ENCODE measurements at regions of chr1 and their contacts with region 1.

Region 1: DNA sequence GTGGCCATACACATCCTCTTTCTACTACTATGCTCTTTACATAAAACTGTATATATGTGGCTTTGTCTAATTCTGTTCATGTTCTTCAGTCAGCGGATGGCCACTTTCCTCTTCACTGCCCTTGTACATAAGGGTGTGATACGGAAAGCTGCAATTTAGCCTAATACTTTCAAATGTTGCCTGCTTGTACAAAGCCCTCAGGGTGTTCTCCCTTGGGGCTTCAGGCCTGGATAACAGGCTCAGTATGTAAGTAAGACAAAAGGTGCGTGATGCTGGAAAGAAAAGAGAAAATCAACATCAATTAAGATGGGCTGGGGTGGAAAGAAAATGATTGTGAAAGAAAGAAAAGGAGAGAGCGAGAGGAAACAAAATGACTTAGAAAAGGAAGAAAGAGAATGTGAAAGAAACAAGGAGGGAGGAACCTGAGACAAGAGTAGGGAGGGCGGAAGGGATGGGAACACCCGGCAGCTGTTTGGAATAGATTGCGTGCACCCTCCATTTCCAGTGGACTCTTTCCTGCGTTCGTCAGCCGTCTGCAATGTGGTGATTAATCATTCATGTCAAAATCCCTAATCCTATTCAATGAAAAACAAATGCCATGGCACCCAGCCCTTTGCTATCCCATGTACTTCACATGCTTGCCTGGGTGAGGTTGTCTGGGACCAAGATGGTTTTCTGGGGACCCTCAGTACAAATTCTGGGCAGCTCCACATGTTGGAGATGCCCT is 553.6 kb downstream of the NUF2 start:
- DNase-seq: no peak
- ATAC-seq: no peak
- H3K4me3 ChIP-seq: no peak overlapping the region
- H3K27ac ChIP-seq: no peak overlapping the region
- H3K4me1 ChIP-seq: no peaks in the 10 kb centered on the region
- H3K27me3 ChIP-seq: no peaks in the 10 kb centered on the region
- CTCF ChIP-seq: no peak
- POLR2A ChIP-seq: no peak
- RAD21 ChIP-seq: no peak

Region 2: DNA sequence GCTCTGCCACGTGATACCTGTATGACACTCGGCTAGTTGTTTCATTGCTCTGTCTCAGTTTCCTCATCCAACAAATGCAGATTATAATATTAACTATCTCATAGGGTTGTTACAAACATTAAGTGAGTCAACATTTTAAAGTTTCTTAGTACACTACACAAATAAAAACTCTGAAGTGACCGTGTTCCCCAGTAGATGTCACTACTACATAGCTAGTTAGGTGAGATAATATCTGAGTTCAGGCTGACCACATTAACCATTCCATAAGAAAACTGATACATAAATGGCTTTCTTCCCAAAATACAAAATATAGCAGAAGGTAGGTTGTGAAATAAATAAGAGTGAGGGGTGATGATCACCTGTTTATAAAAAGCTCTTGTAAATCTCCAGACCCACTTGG is 339.6 kb before region 1 on chr1:
- CTCF ChIA-PET with region 1: no interaction called
- POLR2A ChIA-PET with region 1: no interaction called
- RAD21 ChIA-PET with region 1: no interaction called
- intact Hi-C with region 1: loop called (anchors 10 kb)
- DNase-seq: peak; percentile 10
- ATAC-seq: peak; percentile 70
- H3K4me3 ChIP-seq: no peak overlapping the region
- H3K27ac ChIP-seq: no peak overlapping the region
- H3K4me1 ChIP-seq: no peaks in the 10 kb centered on the region
- H3K27me3 ChIP-seq: no peaks in the 10 kb centered on the region
- CTCF ChIP-seq: peak; percentile 19 to 56 (median 31); a peak in 4 of 6 replicates
- POLR2A ChIP-seq: no peak
- RAD21 ChIP-seq: peak; percentile 64

Region 3: GRCh38 chr1:163807061-163808049 is 68.0 kb before region 1 on chr1:
- CTCF ChIA-PET with region 1: no interaction called
- POLR2A ChIA-PET with region 1: no interaction called
- RAD21 ChIA-PET with region 1: no interaction called
- intact Hi-C with region 1: no loop called
- DNase-seq: no peak
- ATAC-seq: no peak
- H3K4me3 ChIP-seq: no peak overlapping the region
- H3K27ac ChIP-seq: no peak overlapping the region
- H3K4me1 ChIP-seq: no peaks in the 10 kb centered on the region
- H3K27me3 ChIP-seq: no peaks in the 10 kb centered on the region
- CTCF ChIP-seq: no peak
- POLR2A ChIP-seq: no peak
- RAD21 ChIP-seq: no peak

Measured in HCT116 (cell line).